Activated CD8-positive, alpha-beta T cell treated with anti-CD3 and anti-CD28 coated beads, Interleukin-2, amount 10 ng/mL, durations not matched to agents 7 days and 5 days (primary cell): ENCODE measurements at regions of chr9 and their contacts with region 1.

Region 1: DNA sequence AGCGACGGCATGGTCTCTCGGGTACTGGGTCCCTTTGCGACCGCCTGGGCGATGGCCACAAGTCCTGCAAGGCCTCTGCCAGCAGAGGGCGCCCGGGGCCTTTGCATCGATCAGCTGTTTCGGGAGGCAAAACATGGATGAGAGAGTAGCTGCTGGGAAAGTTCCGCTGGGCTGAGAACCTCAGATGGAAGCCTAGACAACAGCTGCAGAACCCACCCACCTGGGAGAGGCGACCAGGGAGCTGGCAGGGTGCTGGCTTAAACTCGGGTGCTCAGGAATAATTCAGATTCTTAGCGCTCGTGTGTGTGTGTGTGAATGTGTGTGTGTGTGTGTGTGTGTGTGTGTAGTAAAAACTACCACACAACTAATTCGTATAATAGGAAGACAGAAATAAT is 50.0 kb downstream of the TRIM32 start:
- DNase-seq: peak; percentile 63
- ATAC-seq: peak; percentile 55
- H3K4me3 Mint-ChIP-seq: no peak overlapping the region
- H3K27ac Mint-ChIP-seq: no peak overlapping the region
- H3K4me1 Mint-ChIP-seq: no peaks in the 10 kb centered on the region
- H3K27me3 Mint-ChIP-seq: no peaks in the 10 kb centered on the region

Region 2: GRCh38 chr9:116318468-116319374 is 418.4 kb before region 1 on chr9:
- CTCF ChIA-PET with region 1: no interaction called
- POLR2A ChIA-PET with region 1: no interaction called
- DNase-seq: no peak
- ATAC-seq: no peak
- H3K4me3 Mint-ChIP-seq: no peak overlapping the region
- H3K27ac Mint-ChIP-seq: no peak overlapping the region
- H3K4me1 Mint-ChIP-seq: no peaks in the 10 kb centered on the region
- H3K27me3 Mint-ChIP-seq: no peaks in the 10 kb centered on the region

Region 3: DNA sequence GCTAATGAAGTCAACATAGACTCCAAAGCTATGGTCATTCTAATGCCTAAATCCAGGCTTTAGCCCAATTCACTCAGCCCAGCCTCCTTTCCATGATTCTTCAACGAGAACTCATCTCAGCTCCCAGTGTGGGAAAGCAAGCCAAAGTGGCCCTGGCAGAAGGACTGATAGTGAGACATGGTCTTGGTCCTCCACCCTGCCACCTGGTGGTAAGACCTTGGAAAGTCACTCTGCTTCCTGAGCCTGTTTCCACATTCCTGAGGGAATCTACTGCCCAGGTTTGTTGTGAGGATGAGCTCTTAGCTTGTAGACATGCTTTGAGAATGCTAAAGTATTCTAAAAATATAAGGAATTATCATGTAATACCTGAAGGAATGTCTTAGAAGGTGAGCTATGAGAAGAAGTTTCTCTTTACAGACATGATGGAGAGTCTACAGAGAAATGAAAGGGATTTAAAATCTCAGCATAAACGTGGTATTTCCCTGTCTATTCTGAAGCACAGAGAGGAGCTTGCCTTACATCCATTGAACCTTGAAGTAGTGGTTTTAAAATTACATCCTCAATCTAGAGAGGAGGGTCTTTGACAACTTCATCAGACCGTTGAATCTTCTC is 123.5 kb after region 1 on chr9:
- CTCF ChIA-PET with region 1: interaction called, 36 read pairs
- POLR2A ChIA-PET with region 1: no interaction called
- DNase-seq: peak; percentile 29
- ATAC-seq: no peak
- H3K4me3 Mint-ChIP-seq: no peak overlapping the region
- H3K27ac Mint-ChIP-seq: no peak overlapping the region
- H3K4me1 Mint-ChIP-seq: no peaks in the 10 kb centered on the region
- H3K27me3 Mint-ChIP-seq: no peaks in the 10 kb centered on the region